Activated CD4-positive, alpha-beta T cell treated with anti-CD3 and anti-CD28 coated beads, Interleukin-2, amount 10 ng/mL, durations not matched to agents 24 days and 14 days (primary cell): ENCODE measurements at regions of chr10 and their contacts with region 1.

Region 1: GRCh38 chr10:95246579-95247051 is 44.2 kb downstream of the PDLIM1 start:
- DNase-seq: peak; percentile 90
- H3K4me3 Mint-ChIP-seq: no peak overlapping the region
- H3K27ac Mint-ChIP-seq: peak overlapping the region; percentile 52
- H3K4me1 Mint-ChIP-seq: peaks cover 29% of the 10 kb centered on the region
- H3K27me3 Mint-ChIP-seq: no peaks in the 10 kb centered on the region

Region 2: GRCh38 chr10:95133016-95133752 is 113.4 kb before region 1 on chr10:
- intact Hi-C with region 1: loop called (anchors 1 kb)
- DNase-seq: peak; percentile 93
- H3K4me3 Mint-ChIP-seq: no peak overlapping the region
- H3K27ac Mint-ChIP-seq: no peak overlapping the region
- H3K4me1 Mint-ChIP-seq: peaks cover 3% of the 10 kb centered on the region
- H3K27me3 Mint-ChIP-seq: peaks cover 4% of the 10 kb centered on the region

Region 3: GRCh38 chr10:95208702-95209391 is 37.8 kb before region 1 on chr10:
- intact Hi-C with region 1: loop called (anchors 5 kb)
- DNase-seq: peak; percentile 43
- H3K4me3 Mint-ChIP-seq: no peak overlapping the region
- H3K27ac Mint-ChIP-seq: no peak overlapping the region
- H3K4me1 Mint-ChIP-seq: no peaks in the 10 kb centered on the region
- H3K27me3 Mint-ChIP-seq: no peaks in the 10 kb centered on the region

Region 4: GRCh38 chr10:95290461-95291364 is 44.1 kb after region 1 on chr10 and contains the start of gene PDLIM1:
- intact Hi-C with region 1: loop called (anchors 2 kb)
- DNase-seq: peak; percentile 89
- H3K4me3 Mint-ChIP-seq: peak within 1 kb of the TSS; percentile 81
- H3K27ac Mint-ChIP-seq: peak within 1 kb of the TSS; percentile 71
- H3K4me1 Mint-ChIP-seq: peaks cover 31% of the 10 kb centered on the region
- H3K27me3 Mint-ChIP-seq: peaks cover 40% of the 10 kb centered on the region
- total RNA-seq, gene PDLIM1: 3.1 and 3.2 TPM in 2 replicates

Region 5: DNA sequence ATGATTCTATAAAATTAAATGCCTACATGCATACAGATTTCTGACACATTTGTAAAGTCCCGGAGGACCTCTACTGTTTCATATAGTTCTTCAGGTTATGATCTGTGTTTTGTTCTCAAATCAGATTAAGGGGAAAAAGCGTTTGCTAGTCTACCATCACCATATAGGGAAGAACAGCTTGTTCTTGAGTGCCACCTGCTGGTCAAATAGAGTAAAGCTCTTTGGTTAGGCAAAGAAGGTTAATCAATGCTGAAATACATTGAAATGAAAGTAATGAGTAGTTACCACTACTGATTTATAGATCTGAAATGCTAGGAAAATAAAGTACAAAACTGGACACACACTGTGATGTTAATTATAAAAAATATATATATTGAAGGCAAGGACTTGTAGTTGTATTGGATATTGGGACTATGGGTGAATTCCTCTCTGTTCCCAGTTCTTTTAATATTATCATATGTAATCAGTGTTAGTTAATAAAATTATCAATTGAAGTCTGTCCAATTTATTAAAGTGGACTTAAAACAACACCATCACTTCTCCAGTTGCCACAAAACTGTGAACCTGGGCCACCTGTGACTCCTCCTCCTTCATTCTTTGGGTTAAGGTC is 116.8 kb after region 1 on chr10:
- intact Hi-C with region 1: loop called (anchors 1 kb)
- DNase-seq: peak; percentile 89
- H3K4me3 Mint-ChIP-seq: no peak overlapping the region
- H3K27ac Mint-ChIP-seq: no peak overlapping the region
- H3K4me1 Mint-ChIP-seq: no peaks in the 10 kb centered on the region
- H3K27me3 Mint-ChIP-seq: peaks cover 18% of the 10 kb centered on the region